ENCODE measurements at regions of chr2 and their contacts with region 1.

Region 1: GRCh38 chr2:198490748-198491147 is 686.4 kb downstream of the PLCL1 start:
- DNase-seq: no peak
- H3K4me3 ChIP-seq: no peak overlapping the region
- H3K27ac ChIP-seq: no peak overlapping the region
- H3K4me1 ChIP-seq: no peaks in the 10 kb centered on the region
- H3K27me3 ChIP-seq: no peaks in the 10 kb centered on the region
- CTCF ChIP-seq: no peak

Region 2: GRCh38 chr2:198424112-198424511 is 66.6 kb before region 1 on chr2:
- CTCF ChIA-PET with region 1: no interaction called
- dilution Hi-C with region 1: no loop called
- in situ Hi-C with region 1: no loop called
- intact Hi-C with region 1: no loop called
- DNase-seq: no peak
- H3K4me3 ChIP-seq: no peak overlapping the region
- H3K27ac ChIP-seq: no peak overlapping the region
- H3K4me1 ChIP-seq: no peaks in the 10 kb centered on the region
- H3K27me3 ChIP-seq: no peaks in the 10 kb centered on the region
- CTCF ChIP-seq: no peak

Region 3: GRCh38 chr2:199128476-199129229 is 637.9 kb after region 1 on chr2:
- CTCF ChIA-PET with region 1: interaction called, 16 read pairs
- dilution Hi-C with region 1: no loop called
- in situ Hi-C with region 1: no loop called
- intact Hi-C with region 1: no loop called
- DNase-seq: no peak
- H3K4me3 ChIP-seq: no peak overlapping the region
- H3K27ac ChIP-seq: no peak overlapping the region
- H3K4me1 ChIP-seq: no peaks in the 10 kb centered on the region
- H3K27me3 ChIP-seq: no peaks in the 10 kb centered on the region
- CTCF ChIP-seq: no peak

Measured in mammary epithelial cell (primary cell).